ENCODE measurements at regions of chr1 and their contacts with region 1.

Region 1: GRCh38 chr1:84772428-84772943 is 82.2 kb upstream of the SSX2IP start:
- DNase-seq: peak; percentile 52 to 66 (median 64)
- H3K4me3 ChIP-seq: no peak overlapping the region
- H3K4me3 Mint-ChIP-seq: no peak overlapping the region
- H3K27ac ChIP-seq: no peak overlapping the region
- H3K27ac Mint-ChIP-seq: peak overlapping the region in 1 of 7 donors; percentile 15
- H3K4me1 ChIP-seq: no peaks in the 10 kb centered on the region
- H3K4me1 Mint-ChIP-seq: peaks cover 0 to 5% (median under 1%) of the 10 kb centered on the region in 4 donors
- H3K27me3 ChIP-seq: no peaks in the 10 kb centered on the region
- H3K27me3 Mint-ChIP-seq: peaks cover 7 to 10% of the 10 kb centered on the region in 2 donors

Region 2: GRCh38 chr1:83905315-83905907 is 867.1 kb before region 1 on chr1:
- CTCF ChIA-PET with region 1: interaction called, 21 read pairs
- POLR2A ChIA-PET with region 1: no interaction called
- intact Hi-C with region 1: loop called (anchors 1 kb)
- DNase-seq: peak in 4 of 5 donors; percentile 8 to 28 (median 16)
- H3K4me3 ChIP-seq: no peak overlapping the region
- H3K4me3 Mint-ChIP-seq: no peak overlapping the region
- H3K27ac ChIP-seq: no peak overlapping the region
- H3K27ac Mint-ChIP-seq: no peak overlapping the region
- H3K4me1 ChIP-seq: no peaks in the 10 kb centered on the region
- H3K4me1 Mint-ChIP-seq: no peaks in the 10 kb centered on the region
- H3K27me3 ChIP-seq: no peaks in the 10 kb centered on the region
- H3K27me3 Mint-ChIP-seq: peaks cover 12 to 14% of the 10 kb centered on the region in 2 donors

Region 3: GRCh38 chr1:83931658-83932253 is 840.7 kb before region 1 on chr1:
- CTCF ChIA-PET with region 1: interaction called, 11 read pairs
- POLR2A ChIA-PET with region 1: no interaction called
- intact Hi-C with region 1: loop called (anchors 1 kb)
- DNase-seq: peak in 4 of 5 donors; percentile 36 to 47 (median 44)
- H3K4me3 ChIP-seq: no peak overlapping the region
- H3K4me3 Mint-ChIP-seq: no peak overlapping the region
- H3K27ac ChIP-seq: no peak overlapping the region
- H3K27ac Mint-ChIP-seq: no peak overlapping the region
- H3K4me1 ChIP-seq: no peaks in the 10 kb centered on the region
- H3K4me1 Mint-ChIP-seq: no peaks in the 10 kb centered on the region
- H3K27me3 ChIP-seq: no peaks in the 10 kb centered on the region
- H3K27me3 Mint-ChIP-seq: peaks cover 4 to 5% of the 10 kb centered on the region in 2 donors

Region 4: DNA sequence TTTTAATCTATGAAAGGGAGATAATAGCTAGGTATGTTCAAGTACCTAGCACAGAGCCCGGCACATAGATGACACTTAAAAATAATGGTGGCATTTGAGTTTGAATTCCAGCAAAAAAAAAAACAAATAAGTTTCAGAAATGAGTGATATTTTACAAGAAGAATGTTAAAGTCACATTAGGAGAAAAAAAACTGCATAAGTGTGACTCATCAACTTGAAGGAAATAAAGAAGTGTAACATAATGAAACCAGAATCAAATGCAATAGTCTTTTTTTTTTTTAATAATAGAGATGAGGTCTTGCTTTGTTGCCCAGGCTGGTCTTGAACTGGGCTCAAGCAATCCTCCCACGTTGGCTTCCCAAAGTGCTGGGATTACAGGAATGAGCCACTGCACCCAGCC is 357.1 kb before region 1 on chr1:
- CTCF ChIA-PET with region 1: no interaction called
- POLR2A ChIA-PET with region 1: no interaction called
- intact Hi-C with region 1: no loop called
- DNase-seq: no peak
- H3K4me3 ChIP-seq: no peak overlapping the region
- H3K4me3 Mint-ChIP-seq: no peak overlapping the region
- H3K27ac ChIP-seq: no peak overlapping the region
- H3K27ac Mint-ChIP-seq: no peak overlapping the region
- H3K4me1 ChIP-seq: no peaks in the 10 kb centered on the region
- H3K4me1 Mint-ChIP-seq: no peaks in the 10 kb centered on the region
- H3K27me3 ChIP-seq: no peaks in the 10 kb centered on the region
- H3K27me3 Mint-ChIP-seq: peaks cover 0 to 1% of the 10 kb centered on the region in 2 donors

Region 5: GRCh38 chr1:84758968-84759491 is 13.5 kb before region 1 on chr1:
- CTCF ChIA-PET with region 1: interaction called, 39 read pairs
- POLR2A ChIA-PET with region 1: no interaction called
- intact Hi-C with region 1: no loop called
- DNase-seq: no peak
- H3K4me3 ChIP-seq: no peak overlapping the region
- H3K4me3 Mint-ChIP-seq: peak overlapping the region in 5 of 8 donors; percentile 25 to 81 (median 55)
- H3K27ac ChIP-seq: no peak overlapping the region
- H3K27ac Mint-ChIP-seq: no peak overlapping the region
- H3K4me1 ChIP-seq: no peaks in the 10 kb centered on the region
- H3K4me1 Mint-ChIP-seq: peaks cover 2 to 12% (median 5%) of the 10 kb centered on the region in 4 donors
- H3K27me3 ChIP-seq: no peaks in the 10 kb centered on the region
- H3K27me3 Mint-ChIP-seq: peaks cover 6 to 9% of the 10 kb centered on the region in 2 donors

Region 6: DNA sequence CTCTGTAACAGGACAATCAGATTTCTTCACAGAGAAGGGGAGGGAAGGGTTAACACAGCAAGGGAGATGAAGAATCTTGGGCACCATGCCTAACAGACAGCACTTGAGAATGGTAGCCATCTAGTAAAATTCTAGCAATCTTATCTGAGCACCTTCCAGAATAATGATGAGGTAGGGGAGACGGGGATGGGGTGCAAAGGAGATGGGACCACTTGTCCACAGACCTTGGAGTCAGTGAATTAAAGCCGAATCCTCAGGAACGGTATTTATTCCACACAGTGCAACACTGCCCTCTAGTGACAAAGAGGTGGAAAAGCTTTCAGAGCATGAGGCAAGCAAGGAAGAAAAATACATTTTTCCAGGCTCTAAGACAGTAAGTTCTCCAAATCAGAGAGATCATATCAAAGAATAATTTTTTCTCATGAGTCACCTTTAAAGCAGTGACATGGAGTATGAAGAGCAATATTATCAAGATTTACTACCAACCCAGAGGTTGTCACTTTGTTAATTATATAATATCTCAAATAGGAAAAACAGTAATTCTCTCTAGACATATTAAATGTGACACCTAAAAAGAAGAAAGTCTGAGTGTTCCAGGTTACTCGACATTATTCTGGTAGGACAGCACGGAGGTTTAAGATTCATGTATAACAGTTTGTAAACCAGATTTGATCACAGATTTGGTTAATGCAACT is 163.8 kb after region 1 on chr1:
- CTCF ChIA-PET with region 1: interaction called, 8 read pairs
- POLR2A ChIA-PET with region 1: no interaction called
- intact Hi-C with region 1: loop called (anchors 1 kb)
- DNase-seq: peak in 4 of 5 donors; percentile 52 to 62 (median 60)
- H3K4me3 ChIP-seq: no peak overlapping the region
- H3K4me3 Mint-ChIP-seq: no peak overlapping the region
- H3K27ac ChIP-seq: no peak overlapping the region
- H3K27ac Mint-ChIP-seq: no peak overlapping the region
- H3K4me1 ChIP-seq: peaks cover 3% of the 10 kb centered on the region
- H3K4me1 Mint-ChIP-seq: peaks cover 0 to 5% (median 2%) of the 10 kb centered on the region in 4 donors
- H3K27me3 ChIP-seq: no peaks in the 10 kb centered on the region
- H3K27me3 Mint-ChIP-seq: no peaks in the 10 kb centered on the region

Region 7: DNA sequence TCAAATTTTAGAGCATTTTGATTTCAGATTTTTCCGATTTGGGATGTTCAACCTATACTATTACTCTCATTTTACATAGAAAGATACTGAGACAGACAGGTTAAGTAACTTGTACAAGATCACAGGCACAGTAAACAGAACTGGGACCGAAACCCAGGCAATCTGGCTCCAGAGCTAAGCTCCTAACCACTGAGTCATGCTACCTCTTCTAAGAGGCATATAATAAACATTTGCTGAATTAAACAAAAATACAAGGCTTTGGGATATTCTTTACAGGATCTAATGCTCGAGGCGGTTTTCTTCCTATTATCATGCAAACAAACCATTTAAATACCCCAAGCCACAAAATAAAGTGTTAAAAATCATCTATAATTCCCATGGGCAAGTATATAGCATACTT is 174.1 kb after region 1 on chr1:
- CTCF ChIA-PET with region 1: no interaction called
- POLR2A ChIA-PET with region 1: no interaction called
- intact Hi-C with region 1: no loop called
- DNase-seq: no peak
- H3K4me3 ChIP-seq: no peak overlapping the region
- H3K4me3 Mint-ChIP-seq: no peak overlapping the region
- H3K27ac ChIP-seq: no peak overlapping the region
- H3K27ac Mint-ChIP-seq: peak overlapping the region in 4 of 7 donors; percentile 54 to 99 (median 88)
- H3K4me1 ChIP-seq: peaks cover 5% of the 10 kb centered on the region
- H3K4me1 Mint-ChIP-seq: peaks cover 5 to 15% (median 11%) of the 10 kb centered on the region in 4 donors
- H3K27me3 ChIP-seq: no peaks in the 10 kb centered on the region
- H3K27me3 Mint-ChIP-seq: peaks cover 0 to 4% of the 10 kb centered on the region in 2 donors